Activated B cell treated with CpG ODN at 0.5 μM for 24 hours (primary cell): ENCODE measurements at regions of chr17 and their contacts with region 1.

Region 1: GRCh38 chr17:59056857-59057256 is 49.8 kb downstream of the TRIM37 start:
- DNase-seq: no peak
- ATAC-seq: no peak
- H3K4me3 Mint-ChIP-seq: no peak overlapping the region
- H3K27ac Mint-ChIP-seq: no peak overlapping the region
- H3K4me1 Mint-ChIP-seq: no peaks in the 10 kb centered on the region
- H3K27me3 Mint-ChIP-seq: no peaks in the 10 kb centered on the region
- CTCF ChIP-seq: no peak

Region 2: GRCh38 chr17:59037960-59038359 is 18.9 kb before region 1 on chr17:
- CTCF ChIA-PET with region 1: no interaction called
- POLR2A ChIA-PET with region 1: interaction called, 14 read pairs
- intact Hi-C with region 1: no loop called
- DNase-seq: no peak
- ATAC-seq: no peak
- H3K4me3 Mint-ChIP-seq: no peak overlapping the region
- H3K27ac Mint-ChIP-seq: no peak overlapping the region
- H3K4me1 Mint-ChIP-seq: no peaks in the 10 kb centered on the region
- H3K27me3 Mint-ChIP-seq: no peaks in the 10 kb centered on the region
- CTCF ChIP-seq: no peak